KBM-7 (cell line): ENCODE measurements at regions of chr12 and their contacts with region 1.

Region 1: GRCh38 chr12:62876938-62877548 is 57.9 kb downstream of the PPM1H start:
- DNase-seq: no peak

Region 2: GRCh38 chr12:63387771-63388170 is 510.7 kb after region 1 on chr12:
- in situ Hi-C with region 1: no loop called
- DNase-seq: no peak

Region 3: GRCh38 chr12:63862214-63863107 is 985.4 kb after region 1 on chr12:
- in situ Hi-C with region 1: loop called (anchors 5 kb)
- DNase-seq: no peak